ENCODE measurements at regions of chr15 and their contacts with region 1.

Region 1: GRCh38 chr15:48352474-48353072 is 21.3 kb downstream of the DUT start:
- DNase-seq: peak; percentile 35 to 71
- ATAC-seq: peak; percentile 80 to 93; a peak in 5 of 6 replicates
- H3K4me3 ChIP-seq: no peak overlapping the region
- H3K27ac ChIP-seq: no peak overlapping the region
- H3K4me1 ChIP-seq: peaks cover 12% of the 10 kb centered on the region; the same call in 2 of the 3 replicates
- CTCF ChIP-seq: peak; percentile 67
- EP300 ChIP-seq: no peak
- POLR2A ChIP-seq: no peak
- RAD21 ChIP-seq: peak; percentile 57 to 66

Region 2: DNA sequence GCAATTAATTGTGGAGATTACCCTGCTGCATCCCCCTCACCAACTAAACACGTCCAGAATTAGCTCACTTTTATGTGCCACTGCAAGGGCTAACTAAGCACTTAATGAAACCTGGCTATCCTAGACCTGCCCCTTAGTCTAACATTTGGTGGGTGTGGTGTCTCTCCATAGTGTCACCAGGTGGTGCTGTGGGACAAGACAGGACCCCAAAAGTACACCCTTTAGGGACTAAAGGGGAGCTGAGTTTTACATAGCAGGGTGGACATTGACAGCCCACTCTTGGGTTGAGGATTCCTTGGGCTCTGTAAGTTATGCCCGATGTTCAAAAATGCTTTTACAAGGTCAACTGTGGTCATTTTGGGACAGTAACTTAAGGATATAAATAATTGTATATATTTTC is 15.6 kb before region 1 on chr15:
- CTCF ChIA-PET with region 1: interaction called, 13 read pairs
- POLR2A ChIA-PET with region 1: no interaction called
- DNase-seq: peak in 1 of 2 experiments; percentile 4
- ATAC-seq: peak; percentile 50 to 55; a peak in 4 of 6 replicates
- H3K4me3 ChIP-seq: no peak overlapping the region
- H3K27ac ChIP-seq: no peak overlapping the region
- H3K4me1 ChIP-seq: peaks cover 16% of the 10 kb centered on the region; the same call in 2 of the 3 replicates
- CTCF ChIP-seq: peak; percentile 18; the same call in 1 of the 3 replicates
- EP300 ChIP-seq: no peak
- POLR2A ChIP-seq: no peak
- RAD21 ChIP-seq: peak in 1 of 2 experiments; percentile 24; a peak in 2 of 5 replicates